ENCODE measurements at regions of chr7 and their contacts with region 1.

Region 1: DNA sequence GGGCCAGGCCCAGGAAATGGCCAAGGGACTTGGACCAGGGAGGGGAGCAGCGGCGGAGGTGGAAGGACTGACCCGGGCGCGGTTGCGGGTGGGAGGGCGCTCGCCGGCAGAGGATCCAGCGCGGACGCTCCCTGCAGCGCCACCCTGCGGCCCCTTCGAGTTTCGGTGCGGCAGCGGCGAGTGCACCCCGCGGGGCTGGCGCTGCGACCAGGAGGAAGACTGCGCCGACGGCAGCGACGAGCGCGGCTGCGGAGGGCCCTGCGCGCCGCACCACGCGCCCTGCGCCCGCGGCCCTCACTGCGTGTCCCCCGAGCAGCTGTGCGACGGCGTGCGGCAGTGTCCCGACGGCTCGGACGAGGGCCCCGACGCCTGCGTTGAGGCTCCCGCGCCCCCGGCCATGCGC is 16.8 kb upstream of the ZNF467 start:
- DNase-seq: peak; percentile 85 to 93 (median 90)
- ATAC-seq: peak; percentile 87
- H3K4me3 ChIP-seq: no peak overlapping the region
- H3K27ac ChIP-seq: no peak overlapping the region
- H3K4me1 ChIP-seq: peaks cover 4 to 76% of the 10 kb centered on the region in 2 experiments; a peak in 4 of 5 replicates
- H3K27me3 ChIP-seq: peaks cover 7 to 65% of the 10 kb centered on the region in 2 experiments; a peak in 4 of 5 replicates
- CTCF ChIP-seq: peak; percentile 71 to 98 (median 95)
- EP300 ChIP-seq: no peak
- POLR2A ChIP-seq: no peak
- RAD21 ChIP-seq: peak; percentile 55 to 75

Region 2: GRCh38 chr7:149742075-149742701 is 48.0 kb before region 1 on chr7:
- CTCF ChIA-PET with region 1: no interaction called
- POLR2A ChIA-PET with region 1: no interaction called
- in situ Hi-C with region 1: no loop called
- intact Hi-C with region 1: loop called (anchors 1 kb)
- DNase-seq: peak; percentile 89 to 92 (median 91)
- ATAC-seq: peak; percentile 96
- H3K4me3 ChIP-seq: no peak overlapping the region
- H3K27ac ChIP-seq: no peak overlapping the region
- H3K4me1 ChIP-seq: peaks cover 4 to 7% of the 10 kb centered on the region in 2 experiments; a peak in 4 of 5 replicates
- H3K27me3 ChIP-seq: peaks cover 10 to 18% of the 10 kb centered on the region in 2 experiments
- CTCF ChIP-seq: peak; percentile 96 to 99 (median 97)
- EP300 ChIP-seq: peak; percentile 31
- POLR2A ChIP-seq: no peak
- RAD21 ChIP-seq: peak; percentile 94 to 99

Region 3: DNA sequence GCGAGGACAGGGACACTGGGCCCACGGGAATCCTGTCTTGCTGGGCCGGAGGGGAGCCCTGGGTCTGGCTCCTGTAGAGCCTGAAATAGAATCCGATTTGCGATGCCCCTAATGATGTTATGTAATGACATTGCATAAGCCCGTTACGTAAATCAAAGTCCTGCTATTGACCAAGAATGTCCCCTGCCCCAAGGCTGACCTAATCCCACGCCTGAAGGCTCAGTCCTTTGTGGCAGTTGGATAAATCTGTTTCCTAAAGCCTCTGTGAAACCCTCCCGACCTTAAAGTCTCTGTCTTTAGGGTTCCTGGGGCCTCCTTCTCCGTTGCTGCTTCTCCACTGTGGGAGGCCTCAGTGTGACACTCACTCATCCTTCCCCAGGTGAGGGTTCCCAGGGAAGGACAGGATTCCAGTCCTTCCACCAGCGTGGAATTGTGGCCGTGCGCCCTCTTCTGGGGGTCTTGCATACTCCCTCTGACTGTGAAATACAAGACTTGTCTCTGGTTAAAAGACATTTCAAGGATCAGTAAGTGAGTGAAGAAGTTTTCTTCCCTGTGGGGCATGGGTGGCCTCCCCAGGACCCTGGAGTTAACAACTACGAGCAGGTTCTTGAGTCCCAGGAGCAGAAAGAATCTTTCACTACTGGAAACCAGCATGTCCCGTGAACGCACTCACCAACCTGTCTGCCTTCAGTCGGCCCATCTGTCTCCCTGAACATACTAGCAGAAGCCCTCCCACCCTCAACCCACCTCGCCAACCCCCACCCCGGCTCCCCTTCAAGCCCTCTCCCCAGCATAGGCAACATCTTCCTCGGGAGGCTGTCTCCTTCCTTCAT is 36.5 kb before region 1 on chr7:
- CTCF ChIA-PET with region 1: no interaction called
- POLR2A ChIA-PET with region 1: interaction called, 3 read pairs
- in situ Hi-C with region 1: no loop called
- intact Hi-C with region 1: loop called (anchors 1 kb)
- DNase-seq: peak; percentile 70 to 80 (median 75)
- ATAC-seq: peak; percentile 89
- H3K4me3 ChIP-seq: no peak overlapping the region
- H3K27ac ChIP-seq: no peak overlapping the region
- H3K4me1 ChIP-seq: peaks cover 3 to 12% of the 10 kb centered on the region in 2 experiments; a peak in 4 of 5 replicates
- H3K27me3 ChIP-seq: peaks cover 3% of the 10 kb centered on the region in 2 experiments; a peak in 1 of 5 replicates
- CTCF ChIP-seq: peak; percentile 88 to 96 (median 89)
- EP300 ChIP-seq: no peak
- POLR2A ChIP-seq: no peak
- RAD21 ChIP-seq: peak; percentile 55 to 83